ENCODE measurements at regions of chr18 and their contacts with region 1.

Region 1: GRCh38 chr18:2932247-2933181 is 80.4 kb downstream of the LPIN2 start:
- DNase-seq: no peak
- H3K4me3 ChIP-seq: no peak overlapping the region
- H3K27ac ChIP-seq: peak overlapping the region in 3 of 8 donors; percentile 26 to 54 (median 32)
- H3K4me1 ChIP-seq: peaks cover 0 to 37% (median 8%) of the 10 kb centered on the region in 6 donors
- H3K27me3 ChIP-seq: no peaks in the 10 kb centered on the region
- CTCF ChIP-seq: peak; percentile 56 to 85 (median 77)
- POLR2A ChIP-seq: no peak

Region 2: GRCh38 chr18:2741651-2742050 is 190.9 kb before region 1 on chr18:
- intact Hi-C with region 1: no loop called
- DNase-seq: no peak
- H3K4me3 ChIP-seq: no peak overlapping the region
- H3K27ac ChIP-seq: no peak overlapping the region
- H3K4me1 ChIP-seq: no peaks in the 10 kb centered on the region
- H3K27me3 ChIP-seq: no peaks in the 10 kb centered on the region
- CTCF ChIP-seq: no peak
- POLR2A ChIP-seq: no peak

Region 3: DNA sequence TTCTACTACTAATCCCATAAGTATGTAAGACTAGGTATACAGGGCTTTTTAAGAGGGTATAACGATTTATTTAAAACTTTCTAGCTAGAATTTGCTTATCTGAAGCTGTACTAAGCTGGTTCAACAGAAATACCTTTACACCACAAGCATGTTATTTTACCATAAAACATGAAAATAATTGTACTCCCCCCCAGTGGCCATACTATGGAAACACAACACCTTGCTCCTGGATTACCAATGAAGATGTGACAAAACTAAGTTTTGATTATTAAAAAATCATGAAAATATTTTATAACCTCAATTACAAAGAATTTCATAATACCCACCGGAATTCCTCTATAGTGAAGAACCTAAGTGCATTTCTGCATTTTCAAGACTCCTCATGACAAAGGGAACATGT is 53.1 kb after region 1 on chr18:
- intact Hi-C with region 1: loop called (anchors 5 kb)
- DNase-seq: no peak
- H3K4me3 ChIP-seq: no peak overlapping the region
- H3K27ac ChIP-seq: peak overlapping the region in 3 of 8 donors; percentile 21 to 39 (median 35)
- H3K4me1 ChIP-seq: peaks cover 12 to 91% (median 55%) of the 10 kb centered on the region in 6 donors
- H3K27me3 ChIP-seq: no peaks in the 10 kb centered on the region
- CTCF ChIP-seq: peak; percentile 33 to 79 (median 66)
- POLR2A ChIP-seq: no peak

Region 4: GRCh38 chr18:3062798-3063680 is 130.5 kb after region 1 on chr18:
- intact Hi-C with region 1: loop called (anchors 10 kb)
- DNase-seq: peak; percentile 89
- H3K4me3 ChIP-seq: peak overlapping the region in 1 of 8 donors; percentile 38
- H3K27ac ChIP-seq: peak overlapping the region in 6 of 8 donors; percentile 75 to 89 (median 86)
- H3K4me1 ChIP-seq: peaks cover 25 to 76% (median 53%) of the 10 kb centered on the region in 6 donors
- H3K27me3 ChIP-seq: peaks cover 0 to 4% (median 0%) of the 10 kb centered on the region in 7 donors
- CTCF ChIP-seq: peak; percentile 38 to 83 (median 70)
- POLR2A ChIP-seq: no peak

Region 5: DNA sequence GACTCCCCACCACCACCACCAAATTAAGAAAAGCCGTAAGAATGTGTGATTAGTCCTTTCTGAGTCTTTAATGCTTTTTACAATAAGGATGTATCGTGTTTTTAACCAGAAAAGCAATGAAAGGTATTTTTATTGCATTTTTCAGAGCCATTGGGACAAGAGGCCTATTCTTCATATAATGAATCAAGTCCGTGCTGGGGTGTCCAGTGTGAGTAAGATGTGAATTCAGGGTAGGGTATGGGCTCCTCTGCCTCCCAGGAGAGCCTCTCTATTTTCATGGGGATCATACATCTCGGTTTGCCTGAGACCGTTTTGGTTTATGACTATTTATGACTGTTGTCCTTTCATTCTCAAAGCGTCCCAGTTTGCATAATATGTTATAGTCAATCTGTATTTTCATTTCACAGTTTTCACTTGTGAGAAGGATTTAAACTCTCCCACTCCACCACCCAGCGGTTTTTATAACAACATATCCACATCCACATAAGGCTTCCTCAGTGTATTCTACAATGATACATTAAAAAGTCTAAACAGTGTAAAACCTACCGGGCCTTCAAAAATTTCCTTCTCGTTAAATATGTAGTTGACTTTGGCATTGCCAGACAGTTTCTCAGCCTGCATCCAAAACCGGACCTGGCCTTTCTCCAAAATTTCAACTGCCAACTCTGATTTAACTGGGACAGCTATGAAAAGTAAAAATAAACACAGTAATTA is 161.3 kb after region 1 on chr18:
- intact Hi-C with region 1: no loop called
- DNase-seq: no peak
- H3K4me3 ChIP-seq: no peak overlapping the region
- H3K27ac ChIP-seq: no peak overlapping the region
- H3K4me1 ChIP-seq: peaks cover 0 to 12% (median 2%) of the 10 kb centered on the region in 6 donors
- H3K27me3 ChIP-seq: no peaks in the 10 kb centered on the region
- CTCF ChIP-seq: no peak
- POLR2A ChIP-seq: no peak

Region 6: DNA sequence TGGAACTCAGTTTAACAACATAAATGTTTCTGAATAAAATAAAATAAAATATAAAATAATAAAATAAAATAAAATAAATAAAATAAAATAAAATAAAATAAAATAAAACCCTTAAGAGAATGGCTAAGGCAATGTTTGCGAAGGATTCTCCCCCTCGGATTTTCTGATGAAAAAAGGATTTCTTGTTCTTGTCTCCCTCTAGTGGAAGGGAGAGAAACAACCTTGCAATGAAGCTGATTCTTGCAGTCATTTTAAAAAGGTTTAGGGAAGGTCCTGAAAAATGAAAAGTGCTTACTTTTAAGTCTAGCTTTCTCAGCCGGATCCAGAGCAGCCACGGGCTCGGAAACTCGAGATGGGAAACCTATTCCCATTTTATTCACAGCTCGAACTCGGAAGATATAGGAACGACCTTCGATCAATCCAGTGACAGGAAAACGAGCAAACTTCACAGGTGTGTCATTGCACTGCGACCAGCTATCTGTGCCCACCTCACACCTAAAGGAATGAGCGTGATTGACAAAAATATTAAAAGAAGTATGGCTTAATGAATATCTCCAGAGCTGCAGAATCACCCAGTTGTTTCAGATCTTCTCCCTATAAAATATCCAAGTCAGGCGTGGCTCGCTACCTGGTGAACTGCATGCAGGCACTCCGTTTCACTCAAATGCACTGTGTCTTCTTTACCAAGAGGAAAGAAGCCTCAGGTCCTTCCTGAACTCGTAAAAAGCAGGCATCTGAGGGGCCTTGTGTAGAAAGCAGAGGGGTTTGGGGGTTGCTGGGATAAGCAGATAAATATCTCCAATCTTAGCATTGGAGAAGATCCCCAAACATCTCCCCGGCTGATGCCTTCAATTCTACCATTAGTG is 219.1 kb after region 1 on chr18:
- intact Hi-C with region 1: loop called (anchors 10 kb)
- DNase-seq: no peak
- H3K4me3 ChIP-seq: no peak overlapping the region
- H3K27ac ChIP-seq: no peak overlapping the region
- H3K4me1 ChIP-seq: peaks cover 0 to 21% (median 3%) of the 10 kb centered on the region in 6 donors
- H3K27me3 ChIP-seq: no peaks in the 10 kb centered on the region
- CTCF ChIP-seq: peak; percentile 43 to 85 (median 69)
- POLR2A ChIP-seq: no peak

Region 7: GRCh38 chr18:3245853-3246634 is 313.5 kb after region 1 on chr18:
- intact Hi-C with region 1: loop called (anchors 5 kb)
- DNase-seq: peak; percentile 98
- H3K4me3 ChIP-seq: peak overlapping the region; percentile 72 to 98 (median 94)
- H3K27ac ChIP-seq: peak overlapping the region; percentile 96 to 100 (median 100)
- H3K4me1 ChIP-seq: peaks cover 28 to 59% (median 49%) of the 10 kb centered on the region in 6 donors
- H3K27me3 ChIP-seq: no peaks in the 10 kb centered on the region
- CTCF ChIP-seq: peak; percentile 82 to 99 (median 95)
- POLR2A ChIP-seq: no peak